B cell (primary cell): ENCODE measurements at regions of chr12 and their contacts with region 1.

Region 1: DNA sequence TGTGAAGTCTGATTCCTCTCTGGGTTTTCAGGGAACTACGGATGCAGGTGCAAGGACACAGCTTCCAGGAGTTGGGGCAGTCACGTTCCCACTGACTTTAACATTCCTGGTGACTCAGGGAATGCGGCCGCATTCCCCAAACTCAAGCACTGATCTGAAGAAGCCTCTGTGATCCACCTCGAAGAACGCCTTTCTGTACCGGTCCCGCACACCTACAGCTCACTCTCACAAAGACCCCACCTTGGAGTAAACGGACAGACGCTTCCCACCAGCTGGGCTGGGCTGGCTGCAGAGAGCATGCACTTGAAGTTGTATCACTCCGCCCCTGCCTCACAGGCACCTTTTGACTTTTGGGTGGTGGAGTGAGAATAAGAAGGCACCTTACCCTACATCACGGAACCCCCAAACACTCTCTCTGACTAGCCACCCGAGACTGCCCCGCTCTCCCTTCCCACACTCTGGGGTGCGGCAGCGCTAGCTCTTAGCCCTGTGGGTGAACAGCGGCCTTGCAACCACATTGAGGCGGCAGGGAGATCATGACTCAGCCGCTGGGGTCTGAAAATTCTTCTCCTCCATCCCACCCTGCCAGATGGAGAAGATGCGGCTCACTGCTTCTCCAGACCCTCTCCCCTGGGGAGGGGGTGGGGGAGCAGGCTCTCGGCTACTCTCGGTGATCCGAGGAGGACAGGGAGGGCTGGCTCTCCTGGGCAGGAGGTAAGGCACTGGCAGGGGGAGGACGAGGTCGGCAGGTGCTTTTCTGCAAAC is 23.7 kb upstream of the HDAC7 start:
- DNase-seq: no peak
- ATAC-seq: no peak
- H3K4me3 ChIP-seq: no peak overlapping the region
- H3K4me3 Mint-ChIP-seq: no peak overlapping the region
- H3K27ac ChIP-seq: no peak overlapping the region
- H3K27ac Mint-ChIP-seq: no peak overlapping the region
- H3K4me1 ChIP-seq: no peaks in the 10 kb centered on the region
- H3K4me1 Mint-ChIP-seq: no peaks in the 10 kb centered on the region
- H3K27me3 ChIP-seq: peaks cover 0 to 6% (median 0%) of the 10 kb centered on the region in 4 experiments
- H3K27me3 Mint-ChIP-seq: no peaks in the 10 kb centered on the region
- CTCF ChIP-seq: no peak

Region 2: GRCh38 chr12:47828608-47829536 is 14.5 kb before region 1 on chr12:
- CTCF ChIA-PET with region 1: interaction called, 31 read pairs
- POLR2A ChIA-PET with region 1: no interaction called
- intact Hi-C with region 1: no loop called
- DNase-seq: no peak
- ATAC-seq: no peak
- H3K4me3 ChIP-seq: no peak overlapping the region
- H3K4me3 Mint-ChIP-seq: no peak overlapping the region
- H3K27ac ChIP-seq: no peak overlapping the region
- H3K27ac Mint-ChIP-seq: no peak overlapping the region
- H3K4me1 ChIP-seq: peaks cover 28 to 35% of the 10 kb centered on the region in 2 donors
- H3K4me1 Mint-ChIP-seq: peaks cover 52% of the 10 kb centered on the region
- H3K27me3 ChIP-seq: no peaks in the 10 kb centered on the region
- H3K27me3 Mint-ChIP-seq: no peaks in the 10 kb centered on the region
- CTCF ChIP-seq: no peak